Left ventricle myocardium superior (tissue), 1 donor: ENCODE measurements at regions of chr11 and their contacts with region 1.

Region 1: GRCh38 chr11:14886513-14886912 is 5.5 kb downstream of the CYP2R1 start:
- DNase-seq: no peak
- ATAC-seq: no peak

Region 2: GRCh38 chr11:14537134-14537599 is 349.3 kb before region 1 on chr11:
- intact Hi-C with region 1: loop called (anchors 5 kb)
- DNase-seq: no peak
- ATAC-seq: no peak

Region 3: GRCh38 chr11:14924318-14924717 is 37.8 kb after region 1 on chr11:
- intact Hi-C with region 1: no loop called
- DNase-seq: no peak
- ATAC-seq: no peak